T-cell (primary cell): ENCODE measurements at regions of chr6 and their contacts with region 1.

Region 1: DNA sequence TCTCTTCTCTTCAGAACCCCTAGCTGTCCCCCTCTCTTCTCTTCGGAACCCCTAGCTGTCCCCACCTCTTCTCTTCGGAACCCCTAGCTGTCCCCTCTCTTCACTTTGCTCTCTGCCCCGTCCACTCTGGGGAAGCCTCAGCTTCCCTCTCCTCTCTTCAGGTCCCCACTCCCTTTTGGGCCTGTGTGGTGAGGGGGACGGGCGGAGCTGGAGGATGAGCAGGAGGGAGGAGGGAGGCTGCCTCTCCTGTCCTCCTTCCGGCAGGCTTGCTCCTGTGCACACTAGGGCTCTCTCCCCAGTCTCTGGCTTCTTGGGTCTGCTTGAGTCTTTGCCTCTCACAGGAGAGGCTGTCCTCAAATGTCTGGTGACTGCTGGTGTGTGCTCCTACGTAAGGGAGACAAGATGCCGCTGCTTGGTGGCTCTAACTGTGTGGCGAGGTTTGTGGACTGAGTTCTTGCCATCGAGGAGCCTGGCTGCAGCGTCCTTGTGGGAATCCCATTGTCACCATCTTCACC is 8.8 kb upstream of the SMOC2 start:
- DNase-seq: no peak
- ATAC-seq: no peak
- H3K4me3 ChIP-seq: no peak overlapping the region
- H3K4me3 Mint-ChIP-seq: no peak overlapping the region
- H3K27ac ChIP-seq: no peak overlapping the region
- H3K27ac Mint-ChIP-seq: no peak overlapping the region
- H3K4me1 ChIP-seq: no peaks in the 10 kb centered on the region
- H3K4me1 Mint-ChIP-seq: no peaks in the 10 kb centered on the region
- H3K27me3 ChIP-seq: peaks cover 0 to 36% of the 10 kb centered on the region in 2 experiments
- H3K27me3 Mint-ChIP-seq: peaks cover 19 to 31% of the 10 kb centered on the region in 2 donors

Region 2: DNA sequence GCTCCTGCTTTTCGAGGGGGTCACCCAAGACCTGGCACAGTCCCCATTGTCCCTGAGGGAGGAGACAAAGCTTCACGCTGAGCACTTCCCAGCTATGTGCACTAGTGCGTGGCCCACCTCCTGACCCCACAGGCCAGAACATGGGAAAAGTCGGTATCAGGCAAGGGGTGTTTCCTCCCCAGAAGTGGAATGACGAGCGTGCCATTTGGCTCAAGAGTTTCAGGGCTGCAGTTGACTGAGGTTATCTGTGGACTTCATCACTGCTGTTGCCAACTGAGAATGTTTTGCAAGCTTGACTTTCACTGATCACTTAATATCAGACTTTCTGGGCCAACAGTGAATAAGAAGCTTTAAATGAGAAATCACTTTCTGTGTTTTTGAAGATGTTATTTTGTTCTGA is 742.4 kb before region 1 on chr6:
- CTCF ChIA-PET with region 1: no interaction called
- POLR2A ChIA-PET with region 1: interaction called in 1 of 2 experiments, 15 read pairs
- DNase-seq: no peak
- ATAC-seq: no peak
- H3K4me3 ChIP-seq: no peak overlapping the region
- H3K4me3 Mint-ChIP-seq: no peak overlapping the region
- H3K27ac ChIP-seq: no peak overlapping the region
- H3K27ac Mint-ChIP-seq: no peak overlapping the region
- H3K4me1 ChIP-seq: no peaks in the 10 kb centered on the region
- H3K4me1 Mint-ChIP-seq: peaks cover 0 to 12% (median 2%) of the 10 kb centered on the region in 3 donors
- H3K27me3 ChIP-seq: peaks cover 0 to 41% of the 10 kb centered on the region in 2 experiments
- H3K27me3 Mint-ChIP-seq: peaks cover 20 to 45% of the 10 kb centered on the region in 2 donors

Region 3: GRCh38 chr6:168451805-168452517 is 19.8 kb after region 1 on chr6:
- CTCF ChIA-PET with region 1: no interaction called
- POLR2A ChIA-PET with region 1: no interaction called
- DNase-seq: no peak
- ATAC-seq: no peak
- H3K4me3 ChIP-seq: no peak overlapping the region
- H3K4me3 Mint-ChIP-seq: no peak overlapping the region
- H3K27ac ChIP-seq: no peak overlapping the region
- H3K27ac Mint-ChIP-seq: no peak overlapping the region
- H3K4me1 ChIP-seq: no peaks in the 10 kb centered on the region
- H3K4me1 Mint-ChIP-seq: no peaks in the 10 kb centered on the region
- H3K27me3 ChIP-seq: peaks cover 0 to 16% of the 10 kb centered on the region in 2 experiments
- H3K27me3 Mint-ChIP-seq: peaks cover 14 to 22% of the 10 kb centered on the region in 2 donors